Activated CD4-positive, alpha-beta T cell treated with anti-CD3 and anti-CD28 coated beads for 36 hours (primary cell): ENCODE measurements at regions of chr6 and their contacts with region 1.

Region 1: GRCh38 chr6:125956506-125957390 is at the start of gene HINT3:
- DNase-seq: peak; percentile 99
- ATAC-seq: peak; percentile 89
- H3K4me3 Mint-ChIP-seq: no peak within 1 kb of the TSS
- H3K27ac Mint-ChIP-seq: peak within 1 kb of the TSS; percentile 65
- H3K4me1 Mint-ChIP-seq: peaks cover 5% of the 10 kb centered on the region
- H3K27me3 Mint-ChIP-seq: peaks cover 6% of the 10 kb centered on the region
- total RNA-seq, gene HINT3: 5.4 to 8.1 TPM

Region 2: DNA sequence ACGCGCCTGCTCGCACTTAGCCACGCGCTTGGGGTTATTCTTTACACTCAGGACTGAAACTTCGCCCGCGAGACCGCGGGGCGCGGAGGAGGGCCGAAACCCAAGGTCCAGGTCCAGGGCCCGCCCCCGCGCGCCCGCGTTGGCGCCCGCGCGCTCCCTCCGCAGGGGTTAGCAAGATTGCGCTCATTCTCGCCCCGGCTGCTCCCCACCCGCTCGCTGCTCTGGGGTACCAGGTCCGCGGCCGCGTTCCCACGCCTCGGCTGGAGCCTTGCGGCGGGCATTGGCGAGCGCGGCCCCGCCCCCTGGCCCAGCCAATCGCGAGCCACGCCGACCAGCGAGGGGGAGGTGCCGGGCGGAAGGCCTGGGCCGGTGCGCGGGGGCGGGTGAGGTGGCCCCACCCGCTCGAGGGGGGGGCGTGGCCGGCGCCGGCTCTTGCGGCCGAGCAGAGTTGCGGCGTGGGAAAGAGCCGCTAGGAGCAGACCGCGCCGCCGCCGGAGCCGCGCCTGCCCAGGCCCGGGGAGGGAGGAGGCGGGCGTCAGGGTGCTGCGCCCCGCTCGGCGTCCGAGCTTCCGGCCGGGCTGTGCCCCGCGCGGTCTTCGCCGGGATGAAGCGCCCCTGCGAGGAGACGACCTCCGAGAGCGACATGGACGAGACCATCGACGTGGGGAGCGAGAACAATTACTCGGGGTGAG is 207.4 kb before region 1 on chr6 and contains the start of gene HEY2:
- CTCF ChIA-PET with region 1: no interaction called
- POLR2A ChIA-PET with region 1: no interaction called
- intact Hi-C with region 1: loop called in 1 of 2 experiments (anchors 2 kb)
- DNase-seq: peak; percentile 91
- ATAC-seq: peak; percentile 78
- H3K4me3 Mint-ChIP-seq: peak within 1 kb of the TSS; percentile 74
- H3K27ac Mint-ChIP-seq: no peak within 1 kb of the TSS
- H3K4me1 Mint-ChIP-seq: peaks cover 35% of the 10 kb centered on the region
- H3K27me3 Mint-ChIP-seq: peaks cover 57% of the 10 kb centered on the region
- total RNA-seq, gene HEY2: not detected

Region 3: GRCh38 chr6:125858427-125859320 is 98.1 kb before region 1 on chr6:
- CTCF ChIA-PET with region 1: no interaction called
- POLR2A ChIA-PET with region 1: no interaction called
- intact Hi-C with region 1: loop called in 1 of 2 experiments (anchors 1 kb)
- DNase-seq: peak; percentile 43
- ATAC-seq: peak; percentile 71
- H3K4me3 Mint-ChIP-seq: no peak overlapping the region
- H3K27ac Mint-ChIP-seq: no peak overlapping the region
- H3K4me1 Mint-ChIP-seq: peaks cover 5% of the 10 kb centered on the region
- H3K27me3 Mint-ChIP-seq: no peaks in the 10 kb centered on the region

Region 4: GRCh38 chr6:125906158-125906998 is 50.4 kb before region 1 on chr6:
- CTCF ChIA-PET with region 1: interaction called, 26 read pairs
- POLR2A ChIA-PET with region 1: no interaction called
- intact Hi-C with region 1: loop called (anchors 1 to 2 kb)
- DNase-seq: peak; percentile 72
- ATAC-seq: no peak
- H3K4me3 Mint-ChIP-seq: no peak overlapping the region
- H3K27ac Mint-ChIP-seq: no peak overlapping the region
- H3K4me1 Mint-ChIP-seq: peaks cover 41% of the 10 kb centered on the region
- H3K27me3 Mint-ChIP-seq: no peaks in the 10 kb centered on the region

Region 5: DNA sequence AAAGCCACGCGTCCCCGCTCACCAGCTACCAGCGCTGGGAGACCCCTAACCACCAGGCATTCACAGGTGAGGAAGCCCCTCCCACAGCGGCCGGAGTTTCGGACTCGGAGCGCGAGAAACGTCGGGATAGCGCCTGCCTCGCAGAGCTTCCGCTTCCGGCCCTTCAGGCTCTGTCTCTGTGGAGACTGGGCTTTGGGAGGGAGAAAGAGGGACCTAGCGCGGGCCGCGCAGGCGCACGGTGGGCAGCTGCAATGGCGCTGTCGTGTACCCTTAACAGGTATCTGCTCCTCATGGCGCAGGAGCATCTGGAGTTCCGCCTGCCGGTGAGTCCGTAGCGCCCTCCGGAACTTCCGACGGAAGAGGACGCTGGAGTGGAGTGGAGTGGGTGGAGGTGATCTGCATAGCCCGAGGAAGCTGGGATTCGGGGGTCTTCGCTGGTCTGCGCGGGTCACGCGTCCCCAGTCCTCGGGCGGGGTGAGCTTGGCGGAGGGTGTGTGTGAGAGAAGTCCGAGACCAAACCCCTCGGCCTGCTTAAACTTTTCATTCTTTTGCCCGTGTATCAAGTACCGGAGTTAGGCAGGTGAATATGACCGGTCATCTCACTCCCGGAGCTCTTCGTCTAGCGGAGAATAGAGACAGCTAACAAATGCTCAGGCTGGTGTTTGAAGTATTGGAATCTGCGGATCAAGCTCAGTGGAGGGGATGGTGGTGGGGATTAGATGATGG is 29.7 kb after region 1 on chr6 and contains the start of gene TRMT11:
- CTCF ChIA-PET with region 1: interaction called, 22 read pairs
- POLR2A ChIA-PET with region 1: interaction called, 3 read pairs
- intact Hi-C with region 1: loop called (anchors 1 kb)
- DNase-seq: peak; percentile 89
- ATAC-seq: peak; percentile 96
- H3K4me3 Mint-ChIP-seq: no peak within 1 kb of the TSS
- H3K27ac Mint-ChIP-seq: peak within 1 kb of the TSS; percentile 20
- H3K4me1 Mint-ChIP-seq: peaks cover 7% of the 10 kb centered on the region
- H3K27me3 Mint-ChIP-seq: no peaks in the 10 kb centered on the region
- total RNA-seq, gene TRMT11: 33.4 to 40.5 TPM

Region 6: DNA sequence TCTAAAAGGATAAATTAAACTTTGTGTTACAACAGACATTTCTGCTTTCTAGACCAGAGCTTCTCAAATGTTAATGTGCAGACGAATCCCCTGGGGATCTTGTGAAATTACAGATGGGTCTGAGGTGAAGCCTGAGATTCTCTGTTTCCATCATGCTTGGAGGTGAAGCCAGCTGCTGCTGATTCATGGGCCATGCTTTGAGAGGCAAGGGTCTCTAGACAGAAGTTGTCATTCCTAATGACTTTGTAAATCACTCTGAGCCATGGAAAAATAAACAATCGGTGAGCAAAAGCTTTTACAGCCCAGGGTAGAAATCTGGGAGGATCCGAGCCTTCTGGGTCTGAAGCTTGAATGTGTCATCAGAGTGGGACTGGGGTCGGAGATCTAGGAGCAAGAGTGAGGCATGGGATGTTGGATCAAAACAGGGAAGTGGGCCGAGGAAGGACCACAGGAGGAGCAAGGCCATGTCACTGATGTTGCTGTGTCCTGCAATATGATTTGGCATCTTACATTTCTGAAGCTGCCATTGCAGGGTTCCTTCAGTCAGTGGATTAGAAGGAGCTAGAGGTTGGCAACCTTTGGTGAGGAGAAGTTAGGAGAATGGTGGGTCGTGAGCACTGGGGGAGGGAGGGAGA is 106.9 kb after region 1 on chr6:
- CTCF ChIA-PET with region 1: no interaction called
- POLR2A ChIA-PET with region 1: no interaction called
- intact Hi-C with region 1: no loop called
- DNase-seq: no peak
- ATAC-seq: no peak
- H3K4me3 Mint-ChIP-seq: no peak overlapping the region
- H3K27ac Mint-ChIP-seq: no peak overlapping the region
- H3K4me1 Mint-ChIP-seq: no peaks in the 10 kb centered on the region
- H3K27me3 Mint-ChIP-seq: no peaks in the 10 kb centered on the region

Region 7: GRCh38 chr6:126427713-126428112 is 471.0 kb after region 1 on chr6:
- CTCF ChIA-PET with region 1: no interaction called
- POLR2A ChIA-PET with region 1: no interaction called
- intact Hi-C with region 1: no loop called
- DNase-seq: no peak
- ATAC-seq: no peak
- H3K4me3 Mint-ChIP-seq: no peak overlapping the region
- H3K27ac Mint-ChIP-seq: no peak overlapping the region
- H3K4me1 Mint-ChIP-seq: no peaks in the 10 kb centered on the region
- H3K27me3 Mint-ChIP-seq: no peaks in the 10 kb centered on the region